ENCODE measurements at regions of chr12 and their contacts with region 1.

Region 1: GRCh38 chr12:12182703-12183365 is 84.0 kb downstream of the LRP6 start:
- DNase-seq: no peak
- ATAC-seq: peak; percentile 13

Region 2: DNA sequence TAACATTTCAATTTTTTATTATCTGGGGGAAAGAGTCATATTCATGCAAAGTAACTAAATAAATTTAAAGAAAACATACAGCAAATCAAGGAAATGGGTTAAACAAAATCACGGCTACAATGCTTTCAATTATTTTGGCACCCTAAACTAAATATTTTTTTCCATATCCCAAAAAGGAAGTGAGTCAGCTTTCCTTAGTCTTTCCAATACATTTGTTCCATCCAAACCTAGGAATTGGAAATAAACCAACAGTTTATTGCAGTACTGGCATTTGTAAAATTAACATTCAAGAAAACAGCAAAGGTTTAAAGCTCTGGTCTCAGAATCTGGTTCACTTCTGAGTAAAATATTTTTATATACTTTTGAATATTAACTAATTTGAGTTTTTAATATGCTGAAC is 22.8 kb before region 1 on chr12:
- intact Hi-C with region 1: loop called (anchors 1 kb)
- DNase-seq: no peak
- ATAC-seq: no peak